Tibial artery (tissue), 4 donors: ENCODE measurements at regions of chr2 and their contacts with region 1.

Region 1: DNA sequence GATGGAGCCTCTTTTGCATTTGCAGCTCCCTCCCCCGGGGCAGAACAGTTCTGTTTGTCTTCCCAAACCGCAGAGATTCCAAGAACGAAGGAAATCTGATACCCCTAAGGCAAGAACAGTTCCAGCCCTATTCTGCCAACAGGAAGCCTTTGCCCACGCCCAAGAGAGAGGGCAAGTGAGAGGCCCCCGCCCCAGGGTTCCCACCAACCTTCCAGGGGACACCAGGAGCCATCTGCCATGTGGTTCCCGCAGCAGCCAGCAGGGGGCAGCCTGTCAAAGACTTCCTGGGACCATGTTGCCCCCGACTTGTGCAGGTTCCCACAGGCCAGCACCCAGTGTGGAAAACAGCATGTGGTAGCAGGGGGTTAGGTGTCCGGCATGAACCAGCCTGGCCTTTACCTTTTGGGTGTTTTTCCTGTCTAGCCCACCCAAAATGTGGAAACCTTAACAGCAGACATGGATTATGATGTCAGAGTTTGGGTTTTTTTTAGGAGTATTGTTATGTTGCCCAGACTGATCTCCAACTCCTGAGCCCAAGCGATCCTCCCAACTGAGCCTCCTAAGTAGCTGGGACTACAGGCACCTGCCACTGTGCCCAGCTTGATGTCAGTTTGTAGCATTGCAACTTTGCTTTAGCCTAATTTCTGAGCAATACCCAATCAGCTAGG is 21.7 kb upstream of the EFHD1 start:
- DNase-seq: peak; percentile 62 to 80
- H3K4me3 ChIP-seq: no peak overlapping the region
- H3K27ac ChIP-seq: peak overlapping the region in 1 of 2 donors; percentile 4
- H3K4me1 ChIP-seq: peaks cover 0 to 9% (median 8%) of the 10 kb centered on the region in 4 donors
- H3K27me3 ChIP-seq: no peaks in the 10 kb centered on the region
- CTCF ChIP-seq: peak; percentile 84 to 91

Region 2: GRCh38 chr2:232668805-232669444 is 57.2 kb after region 1 on chr2:
- intact Hi-C with region 1: loop called (anchors 2 kb)
- DNase-seq: peak in 1 of 2 donors; percentile 36
- H3K4me3 ChIP-seq: no peak overlapping the region
- H3K27ac ChIP-seq: peak overlapping the region; percentile 71 to 78
- H3K4me1 ChIP-seq: peaks cover 0 to 63% (median 31%) of the 10 kb centered on the region in 4 donors
- H3K27me3 ChIP-seq: no peaks in the 10 kb centered on the region
- CTCF ChIP-seq: peak; percentile 55 to 65

Region 3: DNA sequence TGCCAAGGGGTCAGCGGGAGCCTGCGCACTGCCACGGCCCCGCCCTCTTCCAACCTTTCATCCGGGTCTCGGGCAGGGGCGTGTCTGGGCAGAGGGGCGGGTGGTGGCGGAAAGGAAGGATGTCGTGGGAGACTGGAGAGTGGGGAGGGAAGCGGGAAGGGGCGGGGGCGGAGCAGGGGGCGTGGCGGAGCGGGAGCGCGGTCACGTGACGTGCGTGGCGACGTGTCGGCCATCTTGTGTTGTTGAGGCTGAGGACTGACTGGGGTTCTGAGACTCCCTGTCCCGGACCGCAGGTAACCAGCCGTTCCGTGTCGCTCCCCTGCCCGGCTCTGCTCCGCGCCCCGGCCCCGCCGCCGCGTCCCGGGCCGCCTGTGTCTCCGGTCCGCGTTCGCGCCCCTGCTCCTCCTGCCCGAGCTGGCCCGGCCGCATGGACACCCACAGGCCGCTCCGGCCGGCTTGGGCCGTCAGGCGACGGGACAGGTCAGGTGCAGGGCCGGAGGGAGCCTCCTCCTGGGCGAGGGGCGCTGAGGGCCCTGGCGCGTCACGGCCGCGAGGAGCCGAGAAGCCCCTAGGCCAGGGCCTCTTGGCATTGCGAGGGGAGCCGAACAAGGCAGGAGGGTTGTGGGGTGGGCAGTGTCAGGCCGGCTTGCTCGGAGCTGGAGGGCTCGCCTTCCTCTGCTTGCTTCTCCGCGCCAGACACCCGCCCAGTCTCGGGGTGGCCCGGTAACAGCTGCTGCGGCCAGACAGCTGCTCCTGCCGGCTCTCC is 85.6 kb after region 1 on chr2 and contains the start of gene GIGYF2:
- intact Hi-C with region 1: loop called (anchors 10 kb)
- DNase-seq: peak; percentile 95 to 98
- H3K4me3 ChIP-seq: peak within 1 kb of the TSS; percentile 96 to 99
- H3K27ac ChIP-seq: peak within 1 kb of the TSS; percentile 95 to 97
- H3K4me1 ChIP-seq: peaks cover 0 to 48% (median 27%) of the 10 kb centered on the region in 4 donors
- H3K27me3 ChIP-seq: no peaks in the 10 kb centered on the region
- CTCF ChIP-seq: no peak

Region 4: GRCh38 chr2:232748038-232748437 is 136.4 kb after region 1 on chr2:
- intact Hi-C with region 1: no loop called
- DNase-seq: no peak
- H3K4me3 ChIP-seq: no peak overlapping the region
- H3K27ac ChIP-seq: no peak overlapping the region
- H3K4me1 ChIP-seq: no peaks in the 10 kb centered on the region
- H3K27me3 ChIP-seq: no peaks in the 10 kb centered on the region
- CTCF ChIP-seq: no peak

Region 5: GRCh38 chr2:233251306-233252116 is 639.8 kb after region 1 on chr2 and contains the start of gene ATG16L1:
- intact Hi-C with region 1: loop called (anchors 5 kb)
- DNase-seq: peak; percentile 91 to 97
- H3K4me3 ChIP-seq: peak within 1 kb of the TSS; percentile 73 to 89
- H3K27ac ChIP-seq: peak within 1 kb of the TSS; percentile 80 to 81
- H3K4me1 ChIP-seq: peaks cover 0 to 30% (median 19%) of the 10 kb centered on the region in 4 donors
- H3K27me3 ChIP-seq: no peaks in the 10 kb centered on the region
- CTCF ChIP-seq: peak; percentile 89 to 96